HCT116 (cell line): ENCODE measurements at regions of chr12 and their contacts with region 1.

Region 1: GRCh38 chr12:20601668-20602280 is 93.4 kb upstream of the SLCO1C1 start:
- DNase-seq: peak; percentile 46
- ATAC-seq: 0 out of 2 replicates have a peak, but pooled peaks have one; percentile 40
- H3K4me3 ChIP-seq: no peak overlapping the region
- H3K27ac ChIP-seq: no peak overlapping the region
- H3K4me1 ChIP-seq: no peaks in the 10 kb centered on the region
- H3K27me3 ChIP-seq: no peaks in the 10 kb centered on the region
- CTCF ChIP-seq: peak; percentile 30 to 56 (median 46); a peak in 4 of 6 replicates
- POLR2A ChIP-seq: no peak
- RAD21 ChIP-seq: peak; percentile 65

Region 2: DNA sequence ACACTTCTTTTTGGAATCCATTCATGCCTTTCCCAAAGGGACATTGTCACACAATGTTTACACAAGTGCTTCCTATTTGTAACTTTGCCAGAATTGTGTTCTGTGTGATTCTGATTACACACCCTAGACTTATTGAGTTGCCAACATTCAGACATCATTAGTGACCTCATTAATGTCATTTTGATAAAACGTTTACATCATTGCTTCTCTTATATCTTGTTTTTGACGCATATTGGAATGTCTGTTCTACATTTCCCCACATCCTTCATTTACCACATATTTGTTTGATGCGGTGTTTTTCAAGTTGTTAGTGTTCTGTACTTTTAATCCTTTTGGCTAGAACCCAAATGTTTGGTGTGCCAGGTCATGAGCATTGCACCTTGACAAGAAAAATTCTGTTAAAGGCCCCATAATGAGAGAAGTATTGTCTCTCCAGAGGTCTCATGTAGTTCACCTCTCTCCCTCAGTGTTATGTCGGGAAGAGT is 857.0 kb before region 1 on chr12:
- CTCF ChIA-PET with region 1: no interaction called
- POLR2A ChIA-PET with region 1: no interaction called
- RAD21 ChIA-PET with region 1: no interaction called
- intact Hi-C with region 1: loop called (anchors 10 kb)
- DNase-seq: no peak
- ATAC-seq: no peak
- H3K4me3 ChIP-seq: no peak overlapping the region
- H3K27ac ChIP-seq: no peak overlapping the region
- H3K4me1 ChIP-seq: no peaks in the 10 kb centered on the region
- H3K27me3 ChIP-seq: no peaks in the 10 kb centered on the region; the same call in 1 of the 2 replicates
- CTCF ChIP-seq: no peak
- POLR2A ChIP-seq: no peak
- RAD21 ChIP-seq: no peak

Region 3: DNA sequence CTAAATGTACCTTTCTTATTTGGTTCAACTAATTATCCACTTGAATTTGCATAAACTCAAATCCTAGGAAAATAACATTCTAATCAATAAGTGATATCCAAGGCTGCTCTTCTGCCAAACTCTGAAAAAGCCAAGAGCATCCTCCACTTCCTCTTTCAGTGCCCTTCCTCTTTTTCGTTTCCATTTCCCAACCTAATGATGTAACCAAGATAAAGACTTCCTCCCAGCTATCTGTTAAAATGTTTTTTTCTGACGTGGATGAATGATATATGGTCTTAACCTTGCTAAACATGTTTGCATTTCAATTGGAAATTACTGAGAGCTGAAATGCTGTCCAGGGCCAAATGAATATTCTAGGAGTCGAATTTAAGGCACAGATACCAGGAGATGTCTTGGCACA is 692.9 kb before region 1 on chr12:
- CTCF ChIA-PET with region 1: no interaction called
- POLR2A ChIA-PET with region 1: no interaction called
- RAD21 ChIA-PET with region 1: no interaction called
- intact Hi-C with region 1: loop called (anchors 10 kb)
- DNase-seq: no peak
- ATAC-seq: no peak
- H3K4me3 ChIP-seq: no peak overlapping the region
- H3K27ac ChIP-seq: no peak overlapping the region
- H3K4me1 ChIP-seq: no peaks in the 10 kb centered on the region
- H3K27me3 ChIP-seq: no peaks in the 10 kb centered on the region
- CTCF ChIP-seq: no peak
- POLR2A ChIP-seq: no peak
- RAD21 ChIP-seq: no peak

Region 4: DNA sequence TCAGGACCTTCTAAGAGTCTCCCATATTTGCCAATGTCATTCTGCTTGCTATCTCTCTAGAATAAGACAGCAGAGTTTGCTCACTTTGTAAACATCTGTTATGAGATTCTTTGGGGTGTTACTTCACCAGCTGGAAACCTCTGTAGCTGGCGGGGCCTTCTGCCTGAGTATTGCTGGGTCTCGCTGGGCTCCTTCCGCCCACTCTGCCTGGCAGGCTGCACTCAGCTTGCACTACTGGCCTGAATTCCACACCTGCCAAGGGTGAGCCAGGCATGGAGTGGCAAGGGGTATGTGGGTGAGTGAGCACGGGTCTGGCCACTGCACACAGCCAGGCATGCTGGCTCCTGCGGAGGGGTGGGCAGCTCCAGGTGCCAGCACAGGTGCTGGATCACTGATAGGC is 500.7 kb before region 1 on chr12:
- CTCF ChIA-PET with region 1: no interaction called
- POLR2A ChIA-PET with region 1: no interaction called
- RAD21 ChIA-PET with region 1: no interaction called
- intact Hi-C with region 1: no loop called
- DNase-seq: no peak
- ATAC-seq: no peak
- H3K4me3 ChIP-seq: no peak overlapping the region
- H3K27ac ChIP-seq: no peak overlapping the region
- H3K4me1 ChIP-seq: no peaks in the 10 kb centered on the region
- H3K27me3 ChIP-seq: no peaks in the 10 kb centered on the region
- CTCF ChIP-seq: no peak
- POLR2A ChIP-seq: no peak
- RAD21 ChIP-seq: no peak

Region 5: DNA sequence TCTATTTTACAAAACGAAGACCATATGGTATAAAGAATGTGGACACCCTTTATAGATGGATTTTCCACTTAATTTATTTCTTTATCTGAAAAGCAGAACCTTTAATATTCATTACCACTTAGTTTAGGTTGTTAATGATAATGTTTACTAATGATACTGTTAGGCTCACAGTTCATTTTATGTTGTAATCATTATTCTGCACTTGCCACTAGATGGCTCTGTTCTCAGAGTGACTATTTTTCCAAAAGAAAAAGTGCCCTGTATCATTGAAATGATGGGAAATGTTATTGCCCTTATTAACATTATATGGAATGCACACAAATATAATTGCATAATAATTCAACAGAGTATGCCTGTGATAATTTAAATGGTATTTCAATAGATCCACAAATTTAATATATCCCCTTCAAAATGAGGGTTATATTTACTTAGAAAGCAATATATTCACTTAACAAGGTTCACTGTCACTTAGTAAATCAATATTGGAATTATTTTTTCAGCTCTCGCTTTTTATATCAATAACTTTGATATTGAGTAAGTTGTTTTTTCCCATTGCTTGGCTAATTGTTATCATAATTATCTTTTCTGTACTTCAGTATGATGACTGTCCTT is 137.8 kb before region 1 on chr12:
- CTCF ChIA-PET with region 1: no interaction called
- POLR2A ChIA-PET with region 1: no interaction called
- RAD21 ChIA-PET with region 1: no interaction called
- intact Hi-C with region 1: loop called (anchors 5 kb)
- DNase-seq: no peak
- ATAC-seq: peak; percentile 50; the same call in 1 of the 2 replicates
- H3K4me3 ChIP-seq: no peak overlapping the region
- H3K27ac ChIP-seq: no peak overlapping the region
- H3K4me1 ChIP-seq: no peaks in the 10 kb centered on the region
- H3K27me3 ChIP-seq: no peaks in the 10 kb centered on the region
- CTCF ChIP-seq: peak; percentile 41 to 76 (median 59); a peak in 5 of 6 replicates
- POLR2A ChIP-seq: no peak
- RAD21 ChIP-seq: peak; percentile 52